ENCODE measurements at regions of chr16 and their contacts with region 1.

Region 1: GRCh38 chr16:88905563-88905962 is 39.1 kb upstream of the PABPN1L start:
- DNase-seq: no peak
- ATAC-seq: no peak
- H3K4me3 ChIP-seq: no peak overlapping the region
- H3K27ac ChIP-seq: no peak overlapping the region
- H3K4me1 ChIP-seq: peaks cover 7 to 20% of the 10 kb centered on the region in 2 donors
- H3K27me3 ChIP-seq: no peaks in the 10 kb centered on the region
- CTCF ChIP-seq: no peak
- POLR2A ChIP-seq: no peak

Region 2: DNA sequence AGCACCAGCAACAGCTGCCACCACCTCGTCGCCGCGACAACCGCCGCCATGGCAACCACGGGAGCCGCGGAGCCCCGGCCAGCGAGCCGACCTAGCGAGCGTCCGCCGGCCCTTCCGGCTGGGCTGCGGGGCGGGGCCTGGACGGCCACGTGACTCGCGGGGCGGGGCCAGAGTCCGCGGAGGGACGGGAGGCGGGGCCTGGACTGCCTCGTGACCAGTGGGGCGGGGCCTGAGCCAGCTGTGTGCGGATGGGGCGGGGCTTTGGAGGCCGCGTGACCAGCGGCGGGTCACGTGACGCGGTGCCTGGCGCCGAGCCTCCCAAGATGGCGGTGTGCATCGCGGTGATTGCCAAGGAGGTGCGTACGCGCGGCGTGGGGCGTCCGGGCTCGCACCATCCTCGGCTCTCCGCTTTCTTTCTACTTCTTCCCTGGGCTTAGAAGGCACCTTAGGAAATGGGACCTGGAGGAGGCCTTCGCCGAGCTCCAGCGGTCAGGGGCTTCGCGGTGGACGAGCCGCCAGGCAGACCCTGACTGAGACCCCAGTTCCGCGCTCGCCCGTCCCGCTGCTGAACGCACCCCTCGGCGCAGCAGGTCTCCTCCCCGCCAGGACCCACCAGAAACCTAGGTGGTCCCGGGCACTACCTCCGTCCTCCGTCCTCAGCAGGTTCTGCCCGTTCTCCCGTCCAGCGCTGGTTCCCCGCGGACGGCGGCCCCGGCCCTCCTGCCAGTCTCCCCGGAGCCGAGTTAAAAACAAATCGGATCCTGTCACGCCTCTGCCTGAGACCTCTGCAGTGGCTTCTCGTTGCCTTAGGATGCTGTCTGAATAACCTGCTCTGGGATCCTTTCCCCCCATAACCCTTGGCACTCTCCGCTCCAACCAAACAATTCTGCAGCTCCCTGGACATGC is 48.5 kb before region 1 on chr16 and contains the starts of genes GALNS and TRAPPC2L:
- in situ Hi-C with region 1: no loop called
- intact Hi-C with region 1: loop called (anchors 10 kb)
- DNase-seq: peak; percentile 97
- ATAC-seq: peak; percentile 92 to 95
- H3K4me3 ChIP-seq: peak within 1 kb of the TSS; percentile 91 to 99 (median 94)
- H3K27ac ChIP-seq: peak within 1 kb of the TSS; percentile 89 to 92 (median 90)
- H3K4me1 ChIP-seq: peaks cover 16 to 17% of the 10 kb centered on the region in 2 donors
- H3K27me3 ChIP-seq: no peaks in the 10 kb centered on the region
- CTCF ChIP-seq: peak in 2 of 5 experiments; percentile 44 to 54
- POLR2A ChIP-seq: peak; percentile 79 to 81
- total RNA-seq, gene GALNS: 8.8 to 14.7 (median 10.0) TPM
- total RNA-seq, gene TRAPPC2L: 17.8 to 27.9 (median 20.5) TPM

Region 3: DNA sequence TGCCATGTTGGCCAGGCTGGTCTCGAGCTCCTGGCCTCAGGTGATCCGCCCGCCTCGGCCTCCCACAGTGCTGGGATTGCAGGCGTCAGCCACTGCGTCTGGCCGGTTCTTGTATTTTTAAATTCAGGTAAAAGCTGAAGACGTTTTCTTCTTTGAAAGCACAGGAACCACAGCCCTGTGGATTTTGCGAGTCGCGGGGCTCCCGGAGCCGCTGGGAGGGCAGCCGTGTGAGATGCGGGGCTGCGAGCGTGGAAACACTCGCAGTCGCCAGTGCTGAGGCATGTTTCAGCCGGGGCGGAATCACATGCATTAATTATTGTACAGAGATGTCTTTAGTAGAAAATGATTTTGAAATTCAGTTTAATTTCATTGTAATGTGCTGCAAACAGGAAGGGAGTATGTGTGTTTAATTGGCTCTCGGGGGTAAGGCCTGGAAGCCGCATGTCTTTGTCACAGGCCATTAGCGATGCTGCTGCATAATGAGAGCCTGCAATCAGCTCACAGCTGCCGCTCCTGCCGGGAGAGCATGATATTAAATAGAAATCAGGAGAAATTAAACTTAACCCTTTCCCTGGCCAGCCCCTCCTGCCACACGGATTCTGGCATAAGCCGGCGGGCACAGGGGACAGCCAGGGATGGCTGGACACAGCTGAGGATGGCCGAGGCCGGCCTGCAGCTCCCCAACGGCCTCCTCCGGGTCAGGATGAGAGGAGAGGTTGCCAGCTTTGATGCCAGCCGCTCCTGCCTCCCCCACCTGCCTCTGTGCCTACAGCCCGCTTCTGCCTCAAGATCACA is 230.6 kb after region 1 on chr16:
- in situ Hi-C with region 1: no loop called
- intact Hi-C with region 1: no loop called
- DNase-seq: no peak
- ATAC-seq: no peak
- H3K4me3 ChIP-seq: no peak overlapping the region
- H3K27ac ChIP-seq: no peak overlapping the region
- H3K4me1 ChIP-seq: no peaks in the 10 kb centered on the region
- H3K27me3 ChIP-seq: no peaks in the 10 kb centered on the region
- CTCF ChIP-seq: no peak
- POLR2A ChIP-seq: no peak